ENCODE measurements at regions of chr1 and their contacts with region 1.

Region 1: GRCh38 chr1:234722904-234723720 is 113.1 kb upstream of the IRF2BP2 start:
- DNase-seq: peak in 8 of 9 experiments; percentile 37 to 76 (median 58)
- ATAC-seq: peak; percentile 26
- H3K4me3 ChIP-seq: peak overlapping the region; percentile 28 to 34
- H3K4me3 Mint-ChIP-seq: peak overlapping the region; percentile 71
- H3K27ac ChIP-seq: peak overlapping the region; percentile 83 to 96
- H3K27ac Mint-ChIP-seq: peak overlapping the region; percentile 92
- H3K4me1 ChIP-seq: peaks cover 38% of the 10 kb centered on the region
- H3K4me1 Mint-ChIP-seq: peaks cover 61% of the 10 kb centered on the region
- H3K27me3 ChIP-seq: no peaks in the 10 kb centered on the region
- H3K27me3 Mint-ChIP-seq: no peaks in the 10 kb centered on the region
- CTCF ChIP-seq: no peak

Region 2: GRCh38 chr1:234842726-234843641 is 119.9 kb after region 1 on chr1:
- CTCF ChIA-PET with region 1: no interaction called
- POLR2A ChIA-PET with region 1: interaction called, 3 read pairs
- intact Hi-C with region 1: loop called (anchors 1 to 10 kb)
- DNase-seq: peak; percentile 10 to 76 (median 51)
- ATAC-seq: peak; percentile 48
- H3K4me3 ChIP-seq: no peak overlapping the region
- H3K4me3 Mint-ChIP-seq: peak overlapping the region; percentile 49
- H3K27ac ChIP-seq: no peak overlapping the region
- H3K27ac Mint-ChIP-seq: peak overlapping the region; percentile 75
- H3K4me1 ChIP-seq: peaks cover 53% of the 10 kb centered on the region
- H3K4me1 Mint-ChIP-seq: peaks cover 57% of the 10 kb centered on the region
- H3K27me3 ChIP-seq: no peaks in the 10 kb centered on the region
- H3K27me3 Mint-ChIP-seq: no peaks in the 10 kb centered on the region
- CTCF ChIP-seq: no peak

Region 3: DNA sequence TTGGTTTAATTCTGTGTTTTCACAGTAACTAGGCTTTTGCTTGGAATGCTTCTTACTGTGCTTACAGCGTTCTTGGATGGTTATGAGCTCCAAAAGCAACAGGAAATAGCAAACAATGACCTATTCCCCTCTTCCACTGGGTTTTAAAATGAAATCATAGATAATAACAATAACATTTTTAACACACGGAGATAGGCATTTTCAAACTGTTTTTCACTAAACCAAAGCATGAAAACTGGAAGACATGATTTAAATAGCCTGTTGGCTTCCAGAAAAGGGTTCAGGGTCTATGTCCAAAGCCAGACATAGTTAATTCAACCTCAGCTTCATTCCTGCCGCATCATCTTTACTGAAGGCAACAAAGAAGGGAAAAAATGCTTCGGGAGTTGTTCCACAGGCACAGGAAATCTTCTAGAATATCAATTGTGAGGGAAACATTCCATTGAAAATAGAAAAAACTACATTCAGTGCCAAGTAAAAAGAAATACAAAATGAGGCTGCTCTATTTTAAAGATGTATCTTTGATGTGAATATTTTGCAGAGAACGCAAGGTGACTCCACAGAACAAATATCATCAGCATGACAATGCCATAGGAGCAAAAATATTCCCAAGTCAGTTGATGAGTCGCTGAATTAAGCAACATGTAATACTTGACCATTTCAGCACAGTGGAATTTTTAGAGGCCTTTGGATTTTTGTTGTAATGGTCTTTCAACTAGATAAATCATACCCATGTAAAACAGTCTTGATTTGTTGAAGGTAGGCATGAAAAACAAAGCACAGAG is 1261.1 kb after region 1 on chr1:
- CTCF ChIA-PET with region 1: no interaction called
- POLR2A ChIA-PET with region 1: no interaction called
- intact Hi-C with region 1: no loop called
- DNase-seq: no peak
- ATAC-seq: no peak
- H3K4me3 ChIP-seq: no peak overlapping the region
- H3K4me3 Mint-ChIP-seq: no peak overlapping the region
- H3K27ac ChIP-seq: no peak overlapping the region
- H3K27ac Mint-ChIP-seq: no peak overlapping the region
- H3K4me1 ChIP-seq: no peaks in the 10 kb centered on the region
- H3K4me1 Mint-ChIP-seq: no peaks in the 10 kb centered on the region
- H3K27me3 ChIP-seq: no peaks in the 10 kb centered on the region
- H3K27me3 Mint-ChIP-seq: peaks cover 4% of the 10 kb centered on the region
- CTCF ChIP-seq: no peak

Measured in CD8-positive, alpha-beta T cell (primary cell).